Esophagus muscularis mucosa (tissue), 4 donors: ENCODE measurements at regions of chr6 and their contacts with region 1.

Region 1: DNA sequence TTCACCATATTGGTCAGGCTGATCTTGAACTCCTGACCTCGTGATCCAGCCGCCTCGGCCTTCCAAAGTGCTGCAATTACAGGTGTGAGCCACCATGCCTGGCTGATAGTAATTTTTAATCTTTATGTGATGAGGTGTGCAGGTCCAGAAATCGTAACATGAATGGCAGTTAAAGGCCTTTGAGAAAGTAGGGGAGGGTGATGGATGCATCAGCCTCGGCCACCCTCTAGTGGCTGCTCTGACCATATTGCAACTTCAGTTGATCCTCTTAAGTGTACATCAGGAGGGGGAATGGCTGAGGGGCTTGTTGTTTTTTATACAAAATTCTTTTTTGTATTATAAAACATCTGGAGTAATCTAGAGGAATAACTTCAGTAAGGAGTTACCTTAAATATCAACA is 193.0 kb downstream of the ZFAND3 start:
- DNase-seq: no peak
- H3K4me3 ChIP-seq: no peak overlapping the region
- H3K27ac ChIP-seq: no peak overlapping the region
- H3K4me1 ChIP-seq: peaks cover 7 to 56% (median 50%) of the 10 kb centered on the region in 4 donors
- H3K27me3 ChIP-seq: no peaks in the 10 kb centered on the region
- CTCF ChIP-seq: peak; percentile 39 to 63 (median 52)
- EP300 ChIP-seq: no peak
- POLR2A ChIP-seq: no peak

Region 2: GRCh38 chr6:37705239-37706051 is 307.1 kb before region 1 on chr6:
- intact Hi-C with region 1: loop called (anchors 10 kb)
- DNase-seq: peak; percentile 95
- H3K4me3 ChIP-seq: peak overlapping the region; percentile 55 to 69 (median 59)
- H3K27ac ChIP-seq: peak overlapping the region; percentile 58 to 81 (median 80)
- H3K4me1 ChIP-seq: peaks cover 9 to 19% (median 13%) of the 10 kb centered on the region in 4 donors
- H3K27me3 ChIP-seq: no peaks in the 10 kb centered on the region
- CTCF ChIP-seq: peak; percentile 71 to 74 (median 74)
- EP300 ChIP-seq: no peak
- POLR2A ChIP-seq: no peak

Region 3: DNA sequence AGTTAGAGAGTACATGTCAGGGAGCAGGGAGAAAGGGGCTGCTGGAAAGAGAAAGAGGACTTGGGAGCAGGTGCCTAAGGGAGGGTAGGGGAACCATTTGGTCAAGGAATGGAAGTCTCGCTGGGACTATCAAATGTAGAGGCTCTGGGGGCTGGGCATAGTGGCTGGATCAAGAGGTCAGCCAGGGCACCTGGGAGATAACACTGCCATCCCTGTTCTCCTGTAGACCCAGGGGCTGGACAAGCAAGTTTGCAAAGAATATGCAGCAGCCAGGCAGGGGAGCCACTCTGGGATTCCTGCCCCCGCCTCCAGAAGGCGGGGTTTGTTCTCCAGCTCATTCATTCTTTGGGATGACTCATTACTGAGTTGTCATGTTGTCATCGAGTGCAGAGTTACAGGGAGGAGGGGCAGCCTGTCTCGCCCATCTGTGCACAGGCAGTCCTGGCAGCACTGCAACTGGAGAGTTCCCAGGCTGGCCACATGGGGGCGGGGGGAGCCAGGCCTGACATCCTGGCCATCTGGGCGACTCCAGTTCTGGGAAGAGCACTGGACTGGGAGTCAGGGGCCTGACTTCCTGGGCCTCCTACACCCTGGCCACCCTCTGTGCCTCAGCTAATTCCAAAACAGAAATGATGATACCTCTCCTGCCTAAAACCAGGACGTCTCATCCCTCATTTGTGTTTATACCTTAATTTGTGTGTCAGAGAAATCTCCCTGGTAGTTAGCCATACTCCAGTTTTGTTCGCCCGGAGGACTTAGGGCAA is 221.2 kb before region 1 on chr6:
- intact Hi-C with region 1: loop called (anchors 5 kb)
- DNase-seq: peak; percentile 94
- H3K4me3 ChIP-seq: no peak overlapping the region
- H3K27ac ChIP-seq: no peak overlapping the region
- H3K4me1 ChIP-seq: peaks cover 4 to 14% (median 13%) of the 10 kb centered on the region in 4 donors
- H3K27me3 ChIP-seq: no peaks in the 10 kb centered on the region
- CTCF ChIP-seq: peak; percentile 92 to 98 (median 94)
- EP300 ChIP-seq: no peak
- POLR2A ChIP-seq: no peak

Region 4: DNA sequence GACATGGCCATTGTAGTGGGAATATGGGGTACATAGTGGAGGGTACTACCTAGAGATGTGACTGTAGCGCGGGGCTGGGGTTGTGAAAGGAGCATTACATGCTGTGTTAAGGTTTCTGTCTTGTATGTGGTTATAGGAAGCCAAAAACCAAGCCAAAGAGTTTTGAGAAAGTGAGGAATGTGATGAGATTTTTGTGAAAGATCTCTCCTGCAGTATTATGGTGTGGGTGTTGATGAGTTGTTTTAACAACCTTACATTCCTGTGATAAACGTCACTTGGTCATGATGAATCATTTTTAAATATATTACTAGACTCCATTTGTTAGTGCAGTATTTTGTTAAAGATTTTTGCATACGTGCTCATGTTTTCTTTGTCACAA is 144.1 kb before region 1 on chr6:
- intact Hi-C with region 1: no loop called
- DNase-seq: no peak
- H3K4me3 ChIP-seq: no peak overlapping the region
- H3K27ac ChIP-seq: no peak overlapping the region
- H3K4me1 ChIP-seq: peaks cover 30 to 51% (median 38%) of the 10 kb centered on the region in 4 donors
- H3K27me3 ChIP-seq: no peaks in the 10 kb centered on the region
- CTCF ChIP-seq: no peak
- EP300 ChIP-seq: no peak
- POLR2A ChIP-seq: no peak